HepG2 (cell line): ENCODE measurements at regions of chr10 and their contacts with region 1.

Region 1: DNA sequence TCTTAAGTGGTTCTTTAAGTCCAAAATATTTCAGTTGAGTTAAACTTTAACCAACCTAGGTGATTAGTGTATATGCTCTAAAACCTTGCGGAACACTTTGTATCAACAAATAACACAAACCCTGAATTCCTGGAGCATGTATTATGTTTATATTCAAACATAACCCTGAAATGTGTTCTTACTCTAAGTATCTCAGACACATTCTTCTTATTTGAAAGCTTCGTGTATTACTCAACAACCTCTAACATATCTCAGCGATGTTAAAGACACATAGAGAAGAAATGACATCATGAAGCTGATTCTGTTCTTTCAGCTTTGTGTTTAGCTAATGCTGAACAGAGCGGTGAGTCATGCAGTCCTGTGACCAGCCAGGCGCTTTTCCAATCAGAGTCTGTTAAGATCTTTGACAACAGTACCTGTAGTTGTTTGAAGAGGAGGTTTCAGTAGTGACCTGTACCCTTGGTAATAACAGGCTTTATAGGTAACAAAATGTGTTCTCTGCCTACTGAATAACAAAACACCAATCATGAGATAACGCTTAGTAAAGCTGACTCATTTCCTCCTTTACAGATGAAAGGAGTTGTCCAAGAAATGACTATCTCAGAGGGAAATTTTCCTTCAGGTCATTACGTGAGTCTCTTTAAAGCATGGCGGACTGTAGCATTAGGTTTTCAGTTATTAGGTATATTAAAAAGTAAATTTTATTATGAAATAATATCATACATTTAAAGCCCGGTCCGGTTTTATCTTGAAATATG is 67.3 kb upstream of the KLF6 start:
- DNase-seq: peak; percentile 98
- ATAC-seq: peak; percentile 96
- H3K4me3 ChIP-seq: peak overlapping the region in 2 of 3 experiments; percentile 20 to 35; a peak in 2 of 6 replicates
- H3K27ac ChIP-seq: peak overlapping the region; percentile 70
- H3K4me1 ChIP-seq: peaks cover 65% of the 10 kb centered on the region
- H3K27me3 ChIP-seq: no peaks in the 10 kb centered on the region
- CTCF ChIP-seq: no peak
- EP300 ChIP-seq: peak; percentile 23 to 90; a peak in 3 of 4 replicates
- POLR2A ChIP-seq: no peak
- RAD21 ChIP-seq: no peak

Region 2: DNA sequence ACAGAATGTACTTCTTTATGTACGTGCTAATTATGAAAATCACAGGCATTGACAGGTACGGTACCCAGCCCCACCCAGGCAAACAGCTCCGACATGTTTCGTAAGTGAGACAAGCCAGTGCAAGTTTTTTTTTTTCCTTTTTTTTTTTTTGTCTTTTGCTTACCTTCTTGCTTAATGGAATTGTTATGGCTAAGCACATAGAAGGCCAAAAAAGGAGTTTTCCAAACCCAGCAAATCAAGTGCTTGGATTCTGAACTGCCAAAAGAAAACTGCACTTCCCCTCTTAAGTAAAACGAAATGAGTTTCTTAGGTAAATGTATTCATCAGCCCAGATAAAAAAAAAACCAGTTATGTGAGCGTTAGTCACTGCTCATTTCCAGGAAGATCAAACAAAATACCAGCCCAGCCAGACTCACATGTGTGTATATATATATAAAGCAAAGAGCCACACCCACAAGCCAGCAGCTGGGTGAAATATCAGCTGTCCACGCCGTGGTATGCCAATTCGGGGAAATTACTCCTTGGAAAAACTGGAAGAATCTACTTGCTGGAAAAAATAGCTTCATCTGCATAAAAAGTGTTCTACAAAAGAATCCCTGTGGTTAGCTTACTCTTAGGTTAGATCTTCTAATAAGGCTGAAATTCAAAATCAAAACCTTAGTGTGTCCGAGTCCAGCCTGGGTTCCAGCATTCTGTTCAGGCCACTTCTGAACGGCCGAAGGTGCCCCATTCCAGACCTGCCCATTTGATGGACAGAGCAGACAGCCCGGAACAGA is 75.3 kb before region 1 on chr10:
- CTCF ChIA-PET with region 1: no interaction called
- POLR2A ChIA-PET with region 1: interaction called, 129 read pairs
- in situ Hi-C with region 1: no loop called
- intact Hi-C with region 1: no loop called
- DNase-seq: peak; percentile 58
- ATAC-seq: no peak
- H3K4me3 ChIP-seq: no peak overlapping the region
- H3K27ac ChIP-seq: no peak overlapping the region
- H3K4me1 ChIP-seq: peaks cover 42% of the 10 kb centered on the region
- H3K27me3 ChIP-seq: no peaks in the 10 kb centered on the region; a peak in 1 of 5 replicates
- CTCF ChIP-seq: no peak
- EP300 ChIP-seq: peak in 1 of 2 experiments; percentile 22; a peak in 1 of 4 replicates
- POLR2A ChIP-seq: peak in 1 of 2 experiments; percentile 60; a peak in 2 of 4 replicates
- RAD21 ChIP-seq: no peak

Region 3: DNA sequence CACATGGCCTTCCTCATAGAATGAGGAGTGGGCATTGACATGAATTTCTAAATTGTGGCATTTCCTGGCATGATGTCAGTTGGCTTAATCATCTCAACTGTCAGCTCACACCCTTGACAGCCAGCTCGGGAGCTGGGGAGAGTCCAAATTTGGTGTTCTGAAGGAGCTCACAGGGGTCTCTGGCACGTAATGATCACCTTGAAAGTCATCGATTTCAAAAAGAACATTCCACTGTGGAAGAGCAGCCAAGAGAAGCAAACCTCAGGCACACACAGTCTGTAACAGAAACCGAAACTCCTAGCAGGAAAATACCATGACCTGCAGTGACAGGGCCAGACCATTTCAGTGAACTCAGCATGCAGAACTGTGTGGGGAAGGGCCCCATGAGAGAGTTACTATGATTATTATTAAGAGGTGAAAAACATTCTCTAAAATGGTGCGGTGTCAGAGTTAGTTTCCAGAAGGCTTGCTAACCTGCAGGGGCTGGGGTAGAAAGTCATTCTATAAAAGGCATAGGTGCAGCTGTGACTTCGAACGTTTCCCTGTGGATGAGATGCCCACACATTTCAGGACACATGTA is 40.9 kb before region 1 on chr10:
- CTCF ChIA-PET with region 1: no interaction called
- POLR2A ChIA-PET with region 1: interaction called, 65 read pairs
- in situ Hi-C with region 1: no loop called
- intact Hi-C with region 1: loop called (anchors 2 kb)
- DNase-seq: no peak
- ATAC-seq: 0 out of 3 replicates have a peak, but pooled peaks have one; percentile 12
- H3K4me3 ChIP-seq: peak overlapping the region in 1 of 3 experiments; percentile 7; a peak in 1 of 6 replicates
- H3K27ac ChIP-seq: peak overlapping the region; percentile 97
- H3K4me1 ChIP-seq: peaks cover 80% of the 10 kb centered on the region
- H3K27me3 ChIP-seq: no peaks in the 10 kb centered on the region
- CTCF ChIP-seq: no peak
- EP300 ChIP-seq: no peak
- POLR2A ChIP-seq: no peak
- RAD21 ChIP-seq: no peak

Region 4: GRCh38 chr10:3879073-3879472 is 26.7 kb after region 1 on chr10:
- CTCF ChIA-PET with region 1: no interaction called
- POLR2A ChIA-PET with region 1: interaction called, 11 read pairs
- in situ Hi-C with region 1: no loop called
- intact Hi-C with region 1: no loop called
- DNase-seq: peak; percentile 73
- ATAC-seq: peak; percentile 74
- H3K4me3 ChIP-seq: peak overlapping the region; percentile 18 to 46 (median 26); a peak in 3 of 6 replicates
- H3K27ac ChIP-seq: peak overlapping the region; percentile 49
- H3K4me1 ChIP-seq: peaks cover 24% of the 10 kb centered on the region
- H3K27me3 ChIP-seq: no peaks in the 10 kb centered on the region
- CTCF ChIP-seq: no peak
- EP300 ChIP-seq: peak in 1 of 2 experiments; percentile 46; a peak in 1 of 4 replicates
- POLR2A ChIP-seq: 0 out of 4 replicates have a peak, but pooled peaks of 1 of the 2 experiments have one; percentile 25
- RAD21 ChIP-seq: no peak

Region 5: GRCh38 chr10:3887885-3888476 is 35.7 kb after region 1 on chr10:
- CTCF ChIA-PET with region 1: no interaction called
- POLR2A ChIA-PET with region 1: interaction called, 23 read pairs
- in situ Hi-C with region 1: no loop called
- intact Hi-C with region 1: loop called (anchors 2 kb)
- DNase-seq: no peak
- ATAC-seq: no peak
- H3K4me3 ChIP-seq: no peak overlapping the region
- H3K27ac ChIP-seq: peak overlapping the region; percentile 78
- H3K4me1 ChIP-seq: peaks cover 68% of the 10 kb centered on the region
- H3K27me3 ChIP-seq: no peaks in the 10 kb centered on the region
- CTCF ChIP-seq: no peak
- EP300 ChIP-seq: no peak
- POLR2A ChIP-seq: no peak
- RAD21 ChIP-seq: no peak

Region 6: GRCh38 chr10:4214908-4215307 is 362.6 kb after region 1 on chr10:
- CTCF ChIA-PET with region 1: no interaction called
- POLR2A ChIA-PET with region 1: no interaction called
- in situ Hi-C with region 1: no loop called
- intact Hi-C with region 1: no loop called
- DNase-seq: no peak
- ATAC-seq: no peak
- H3K4me3 ChIP-seq: no peak overlapping the region
- H3K27ac ChIP-seq: no peak overlapping the region
- H3K4me1 ChIP-seq: no peaks in the 10 kb centered on the region
- H3K27me3 ChIP-seq: peaks cover 0 to 9% of the 10 kb centered on the region in 2 experiments; a peak in 2 of 5 replicates
- CTCF ChIP-seq: no peak
- EP300 ChIP-seq: no peak
- POLR2A ChIP-seq: no peak
- RAD21 ChIP-seq: no peak